ENCODE measurements at regions of chr14 and their contacts with region 1.

Region 1: GRCh38 chr14:54347997-54348611 is 48.7 kb upstream of the CDKN3 start:
- DNase-seq: no peak
- H3K4me3 Mint-ChIP-seq: no peak overlapping the region
- H3K27ac Mint-ChIP-seq: no peak overlapping the region
- H3K4me1 Mint-ChIP-seq: no peaks in the 10 kb centered on the region
- H3K27me3 Mint-ChIP-seq: peaks cover 12% of the 10 kb centered on the region

Region 2: GRCh38 chr14:54329082-54329695 is 18.9 kb before region 1 on chr14:
- CTCF ChIA-PET with region 1: interaction called, 12 read pairs
- POLR2A ChIA-PET with region 1: no interaction called
- DNase-seq: no peak
- H3K4me3 Mint-ChIP-seq: no peak overlapping the region
- H3K27ac Mint-ChIP-seq: no peak overlapping the region
- H3K4me1 Mint-ChIP-seq: no peaks in the 10 kb centered on the region
- H3K27me3 Mint-ChIP-seq: peaks cover 34% of the 10 kb centered on the region

Region 3: DNA sequence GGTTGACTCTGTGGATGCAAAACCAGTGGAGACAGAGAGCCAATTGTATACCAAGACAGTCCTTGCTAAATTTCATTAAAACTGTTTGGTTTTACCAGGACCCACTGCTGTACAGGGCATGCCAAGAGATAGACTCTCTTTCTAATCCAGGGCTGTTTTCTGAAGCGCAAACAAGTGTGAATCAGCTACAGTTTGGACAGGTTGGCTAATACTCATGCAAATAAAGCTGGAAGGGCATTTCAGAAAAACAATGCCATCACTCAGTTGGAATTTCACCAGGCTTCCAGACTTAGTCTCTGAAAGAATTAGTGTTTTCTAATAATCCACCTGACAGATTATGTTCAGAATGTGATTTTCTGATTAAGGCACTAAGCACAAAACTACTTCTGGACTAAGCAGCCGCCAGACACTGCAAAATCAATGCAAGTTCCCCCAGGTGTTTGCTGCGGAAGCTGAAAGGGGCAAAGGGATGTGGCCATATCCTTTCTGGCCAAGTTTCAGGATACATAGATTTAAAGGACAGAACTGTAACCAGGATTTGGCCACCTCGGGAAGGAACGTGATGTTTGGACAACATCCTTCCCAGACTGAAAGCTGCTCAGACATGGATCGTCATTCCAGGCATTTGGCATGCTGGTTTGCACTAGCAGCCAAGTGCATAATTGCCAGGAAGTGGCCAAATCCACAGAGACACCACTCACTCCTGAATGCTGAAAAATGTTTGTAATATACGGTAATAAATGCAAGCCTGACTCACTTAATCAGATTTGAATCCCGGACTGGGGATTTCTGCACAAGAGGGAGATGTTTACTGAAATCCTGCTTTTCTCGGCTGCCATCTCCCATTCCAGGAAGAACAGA is 16.7 kb after region 1 on chr14:
- CTCF ChIA-PET with region 1: interaction called, 10 read pairs
- POLR2A ChIA-PET with region 1: no interaction called
- DNase-seq: no peak
- H3K4me3 Mint-ChIP-seq: no peak overlapping the region
- H3K27ac Mint-ChIP-seq: no peak overlapping the region
- H3K4me1 Mint-ChIP-seq: no peaks in the 10 kb centered on the region
- H3K27me3 Mint-ChIP-seq: peaks cover 28% of the 10 kb centered on the region

Region 4: GRCh38 chr14:54691525-54692283 is 343.6 kb after region 1 on chr14:
- CTCF ChIA-PET with region 1: no interaction called
- POLR2A ChIA-PET with region 1: no interaction called
- DNase-seq: peak; percentile 57
- H3K4me3 Mint-ChIP-seq: no peak overlapping the region
- H3K27ac Mint-ChIP-seq: no peak overlapping the region
- H3K4me1 Mint-ChIP-seq: peaks cover 10% of the 10 kb centered on the region
- H3K27me3 Mint-ChIP-seq: peaks cover 38% of the 10 kb centered on the region

Region 5: DNA sequence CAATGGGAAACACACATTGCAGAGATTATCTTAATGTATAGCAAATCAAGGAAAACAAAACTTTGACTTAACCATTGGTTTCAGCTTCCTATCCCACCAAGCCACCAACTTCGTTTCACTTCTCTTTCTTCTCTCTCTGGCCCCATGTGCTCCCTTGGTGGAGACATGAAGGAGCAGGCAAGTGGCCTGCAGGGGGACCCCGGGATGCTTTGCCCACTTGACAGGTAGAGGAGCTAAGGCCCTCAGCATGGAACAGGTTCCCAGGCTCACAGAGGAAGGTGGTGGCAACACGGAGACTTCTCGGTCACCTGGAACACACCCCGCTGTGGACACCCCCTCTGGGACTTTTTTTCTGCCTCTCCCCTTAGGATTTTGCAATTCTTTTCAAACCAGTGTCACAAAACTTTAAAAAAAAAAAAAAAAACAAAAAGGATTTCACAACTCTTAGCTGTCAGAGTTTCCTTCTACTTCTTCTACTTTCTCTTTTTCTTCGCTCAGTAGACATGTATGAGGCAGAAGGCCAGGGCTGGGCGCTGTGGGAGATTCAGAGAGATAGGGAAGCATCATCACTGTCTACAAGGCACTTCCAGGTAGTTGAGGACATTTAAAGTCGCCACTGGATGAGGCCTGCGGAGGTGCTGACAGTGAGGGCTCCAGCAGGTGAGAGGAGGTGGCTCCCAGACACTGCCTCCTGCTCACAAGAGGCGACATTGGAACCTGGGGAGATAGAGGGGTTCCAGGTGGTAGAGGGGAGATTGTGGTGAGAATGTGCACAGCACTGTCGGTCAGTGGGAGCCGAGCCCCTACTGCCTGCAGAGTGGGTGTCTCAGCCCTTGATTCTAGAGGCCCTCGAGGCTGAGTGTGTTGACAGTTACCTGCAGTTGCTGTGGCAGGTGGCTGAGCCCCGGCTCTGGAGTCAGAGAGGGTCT is 434.9 kb after region 1 on chr14:
- CTCF ChIA-PET with region 1: no interaction called
- POLR2A ChIA-PET with region 1: no interaction called
- DNase-seq: no peak
- H3K4me3 Mint-ChIP-seq: no peak overlapping the region
- H3K27ac Mint-ChIP-seq: no peak overlapping the region
- H3K4me1 Mint-ChIP-seq: peaks cover 6% of the 10 kb centered on the region
- H3K27me3 Mint-ChIP-seq: peaks cover 25% of the 10 kb centered on the region